ENCODE measurements at regions of chr2 and their contacts with region 1.

Region 1: DNA sequence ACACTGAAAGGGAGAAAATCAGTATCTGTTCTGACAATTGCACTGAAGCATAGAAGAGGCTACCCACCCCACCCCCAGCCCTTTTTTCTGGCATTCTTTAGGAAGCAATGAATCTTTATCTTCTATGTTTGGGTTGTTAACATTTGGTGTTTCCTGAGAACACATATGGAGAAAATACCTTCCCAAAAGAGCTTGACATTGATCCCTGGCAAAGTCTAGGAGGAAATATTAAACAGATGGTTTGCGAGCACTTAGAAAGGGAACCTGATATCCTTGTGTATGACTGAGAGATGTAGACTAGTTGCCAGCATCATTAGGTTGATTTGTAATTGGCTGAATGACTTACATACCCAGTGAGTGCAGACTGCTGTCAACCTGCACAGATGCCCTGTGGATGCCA is 42.9 kb downstream of the DOK1 start:
- DNase-seq: no peak

Region 2: DNA sequence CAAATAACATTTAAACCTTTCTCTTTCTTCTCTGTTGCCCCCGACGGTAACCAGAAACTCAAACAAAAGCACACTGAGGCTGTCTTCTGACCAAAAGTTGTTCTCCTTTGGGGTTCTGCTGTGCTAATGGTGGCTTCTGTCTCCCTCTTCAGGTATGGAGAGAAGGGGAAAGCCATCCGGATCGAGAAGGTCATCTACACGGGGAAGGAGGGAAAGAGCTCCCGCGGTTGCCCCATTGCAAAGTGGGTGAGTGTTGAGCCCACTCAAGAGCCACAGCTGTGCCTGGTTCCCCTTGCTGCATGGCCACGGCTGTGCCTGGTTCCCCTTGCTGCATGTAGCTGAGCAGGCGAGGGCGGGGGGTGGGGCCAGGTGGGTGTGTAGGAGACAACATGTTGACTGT is 517.1 kb before region 1 on chr2:
- in situ Hi-C with region 1: no loop called
- DNase-seq: no peak

Region 3: GRCh38 chr2:74162951-74163350 is 434.5 kb before region 1 on chr2:
- in situ Hi-C with region 1: no loop called
- DNase-seq: no peak

Region 4: GRCh38 chr2:74482801-74483674 is 114.4 kb before region 1 on chr2 and contains the starts of genes CCDC142 and TTC31:
- in situ Hi-C with region 1: loop called (anchors 10 kb)
- DNase-seq: peak; percentile 96

Region 5: DNA sequence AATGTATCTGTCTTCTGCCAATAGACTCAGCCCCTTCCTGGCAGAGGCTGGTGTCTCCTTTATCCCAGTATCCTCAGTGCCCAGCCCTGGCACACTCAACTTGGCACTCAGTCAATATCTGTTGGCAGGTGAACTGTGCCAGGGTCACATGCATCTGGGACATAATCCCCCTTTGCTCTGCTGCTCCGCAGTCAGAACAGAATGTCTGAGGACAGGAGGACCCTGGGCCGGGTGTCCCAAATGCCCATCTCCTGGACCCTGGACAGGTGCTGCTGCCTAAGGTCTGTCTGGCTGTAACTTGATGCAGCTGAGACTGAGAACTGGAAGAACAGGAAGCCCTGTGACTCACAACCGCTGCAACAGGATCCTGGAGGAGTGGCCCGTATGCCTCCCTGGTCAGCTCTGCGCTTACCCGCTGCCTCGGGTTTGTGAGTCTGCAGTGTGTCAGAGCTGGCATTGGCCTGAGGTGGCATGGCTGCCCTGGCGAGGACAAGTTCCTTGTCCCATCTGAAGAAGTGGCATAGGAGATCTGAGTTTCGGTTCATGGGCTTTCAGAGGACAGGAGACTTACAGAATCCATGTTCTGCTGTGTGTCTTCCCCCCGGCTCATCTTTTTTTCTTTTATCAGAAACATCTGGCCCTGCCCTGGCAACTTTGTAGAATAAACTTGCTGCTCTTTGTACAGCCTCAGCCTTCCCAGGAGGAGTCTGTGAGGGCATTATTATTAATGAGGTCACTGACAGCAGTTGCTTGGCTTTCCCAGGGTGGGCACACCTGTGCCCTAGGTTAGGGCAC is 248.0 kb after region 1 on chr2:
- in situ Hi-C with region 1: no loop called
- DNase-seq: peak; percentile 60